Uterus (tissue), 4 donors: ENCODE measurements at regions of chr10 and their contacts with region 1.

Region 1: DNA sequence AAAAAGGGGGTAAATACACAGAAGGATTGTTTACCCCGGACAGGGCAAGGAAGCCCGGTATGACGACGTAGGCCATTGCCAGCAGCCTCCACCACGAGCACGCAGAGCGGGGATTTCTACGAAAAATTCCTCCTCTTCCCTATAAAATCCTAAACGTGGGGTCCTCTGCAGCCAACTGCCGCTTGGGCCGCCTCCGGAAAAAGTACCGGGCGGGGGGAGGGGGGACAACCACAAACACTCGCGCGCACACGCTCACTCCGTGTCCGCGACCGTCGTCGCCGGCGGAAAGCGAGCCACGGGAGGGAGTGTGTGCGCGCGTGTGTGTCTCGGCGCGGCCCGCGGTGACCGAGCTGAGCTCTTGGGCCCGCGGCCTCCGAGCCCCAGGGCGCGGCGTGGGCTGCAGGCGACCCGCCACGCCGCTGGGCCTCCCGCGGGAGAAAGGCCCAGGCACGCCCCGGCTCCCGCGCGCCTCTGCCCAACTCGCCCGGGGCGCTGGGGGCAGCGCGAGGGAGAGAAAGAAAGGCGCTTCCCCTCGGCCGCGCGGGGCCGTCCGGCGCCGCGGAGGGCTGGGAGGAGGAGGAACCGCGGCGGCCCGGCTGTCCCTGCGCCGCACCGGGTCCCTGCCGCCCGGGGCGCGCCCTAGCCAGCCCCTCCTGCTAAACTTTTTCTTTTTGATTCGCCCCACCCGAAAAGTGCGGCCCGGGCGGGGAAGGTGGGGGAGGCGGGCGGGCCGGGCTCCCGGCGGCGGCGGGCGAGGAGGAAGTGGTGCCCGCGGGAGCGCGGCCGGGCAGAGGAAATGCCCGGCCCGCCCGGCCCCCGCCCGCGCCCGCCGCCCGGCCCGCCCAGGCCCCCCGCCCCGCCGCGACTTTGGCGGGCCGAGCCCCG is 1.5 kb downstream of the CTBP2 start:
- DNase-seq: peak; percentile 38 to 48
- H3K4me3 ChIP-seq: peak overlapping the region; percentile 50 to 76
- H3K27ac ChIP-seq: peak overlapping the region; percentile 95 to 99
- H3K4me1 ChIP-seq: peaks cover 19 to 20% of the 10 kb centered on the region in 2 donors
- H3K27me3 ChIP-seq: no peaks in the 10 kb centered on the region
- CTCF ChIP-seq: peak in 1 of 4 experiments; percentile 9
- POLR2A ChIP-seq: peak; percentile 64 to 69

Region 2: GRCh38 chr10:124975977-124976514 is 182.8 kb before region 1 on chr10:
- intact Hi-C with region 1: no loop called
- DNase-seq: no peak
- H3K4me3 ChIP-seq: no peak overlapping the region
- H3K27ac ChIP-seq: no peak overlapping the region
- H3K4me1 ChIP-seq: no peaks in the 10 kb centered on the region
- H3K27me3 ChIP-seq: no peaks in the 10 kb centered on the region
- CTCF ChIP-seq: no peak
- POLR2A ChIP-seq: no peak

Region 3: GRCh38 chr10:125057158-125058001 is 101.5 kb before region 1 on chr10:
- intact Hi-C with region 1: loop called (anchors 10 kb)
- DNase-seq: peak; percentile 85 to 93
- H3K4me3 ChIP-seq: no peak overlapping the region
- H3K27ac ChIP-seq: peak overlapping the region; percentile 91 to 99
- H3K4me1 ChIP-seq: peaks cover 45 to 63% of the 10 kb centered on the region in 2 donors
- H3K27me3 ChIP-seq: no peaks in the 10 kb centered on the region
- CTCF ChIP-seq: no peak
- POLR2A ChIP-seq: peak; percentile 9 to 44